ENCODE measurements at regions of chr1 and their contacts with region 1.

Region 1: DNA sequence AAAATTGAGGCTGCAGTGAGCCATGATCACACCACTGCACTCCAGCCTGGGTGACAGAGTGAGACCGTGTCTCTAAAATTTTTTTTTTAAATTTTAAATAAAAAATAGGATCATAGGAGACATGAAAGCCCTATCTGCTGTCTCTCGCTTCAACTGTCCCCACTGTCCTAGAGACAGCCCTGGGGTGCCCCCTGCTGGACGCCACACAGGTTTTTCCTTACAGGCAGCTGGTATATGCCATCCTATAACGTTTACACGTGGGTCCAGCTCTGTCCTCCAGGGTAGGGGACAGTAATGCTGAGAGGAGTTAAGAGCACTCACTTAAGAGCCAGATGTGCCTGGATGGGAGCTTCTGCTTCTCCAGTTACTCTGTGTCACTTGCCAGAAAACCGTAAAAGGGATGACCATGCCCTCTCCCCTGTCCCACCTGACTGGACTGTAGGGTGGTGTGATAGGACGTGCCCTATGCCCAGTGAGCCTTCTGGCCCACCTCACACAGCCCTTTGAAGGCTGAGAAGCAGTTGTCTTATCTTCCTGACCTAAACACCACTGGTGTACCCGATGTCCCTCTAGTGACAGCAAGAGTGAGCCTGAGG is 8.5 kb downstream of the FBXO2 start:
- DNase-seq: peak; percentile 79
- ATAC-seq: peak; percentile 48
- H3K4me3 ChIP-seq: no peak overlapping the region
- H3K4me3 Mint-ChIP-seq: no peak overlapping the region
- H3K27ac ChIP-seq: no peak overlapping the region
- H3K27ac Mint-ChIP-seq: no peak overlapping the region
- H3K4me1 ChIP-seq: peaks cover 12 to 16% of the 10 kb centered on the region in 2 donors
- H3K4me1 Mint-ChIP-seq: peaks cover 18% of the 10 kb centered on the region
- H3K27me3 ChIP-seq: peaks cover 0 to 3% (median 0%) of the 10 kb centered on the region in 4 experiments
- H3K27me3 Mint-ChIP-seq: no peaks in the 10 kb centered on the region
- CTCF ChIP-seq: peak; percentile 93

Region 2: GRCh38 chr1:11262171-11263049 is 383.4 kb before region 1 on chr1 and contains the start of gene MTOR:
- CTCF ChIA-PET with region 1: interaction called, 3 read pairs
- POLR2A ChIA-PET with region 1: no interaction called
- intact Hi-C with region 1: loop called (anchors 5 kb)
- DNase-seq: peak; percentile 99
- ATAC-seq: peak; percentile 97
- H3K4me3 ChIP-seq: peak within 1 kb of the TSS; percentile 88 to 95 (median 89)
- H3K4me3 Mint-ChIP-seq: peak within 1 kb of the TSS; percentile 92
- H3K27ac ChIP-seq: peak within 1 kb of the TSS; percentile 47 to 92
- H3K27ac Mint-ChIP-seq: peak within 1 kb of the TSS; percentile 83
- H3K4me1 ChIP-seq: peaks cover 8 to 17% of the 10 kb centered on the region in 2 donors
- H3K4me1 Mint-ChIP-seq: peaks cover 17% of the 10 kb centered on the region
- H3K27me3 ChIP-seq: no peaks in the 10 kb centered on the region
- H3K27me3 Mint-ChIP-seq: no peaks in the 10 kb centered on the region
- CTCF ChIP-seq: peak; percentile 20
- total RNA-seq, gene MTOR: 50.7 and 52.3 TPM in 2 replicates

Region 3: GRCh38 chr1:11337580-11338073 is 308.1 kb before region 1 on chr1:
- CTCF ChIA-PET with region 1: interaction called, 10 read pairs
- POLR2A ChIA-PET with region 1: no interaction called
- intact Hi-C with region 1: loop called (anchors 1 kb)
- DNase-seq: peak; percentile 72
- ATAC-seq: peak; percentile 56
- H3K4me3 ChIP-seq: no peak overlapping the region
- H3K4me3 Mint-ChIP-seq: no peak overlapping the region
- H3K27ac ChIP-seq: no peak overlapping the region
- H3K27ac Mint-ChIP-seq: no peak overlapping the region
- H3K4me1 ChIP-seq: peaks cover 16 to 23% of the 10 kb centered on the region in 2 donors
- H3K4me1 Mint-ChIP-seq: peaks cover 23% of the 10 kb centered on the region
- H3K27me3 ChIP-seq: peaks cover 0 to 20% (median 6%) of the 10 kb centered on the region in 4 experiments
- H3K27me3 Mint-ChIP-seq: peaks cover 23% of the 10 kb centered on the region
- CTCF ChIP-seq: peak; percentile 87

Region 4: GRCh38 chr1:11634365-11635192 is 11.2 kb before region 1 on chr1:
- CTCF ChIA-PET with region 1: interaction called, 10 read pairs
- POLR2A ChIA-PET with region 1: no interaction called
- intact Hi-C with region 1: no loop called
- DNase-seq: peak; percentile 33
- ATAC-seq: peak; percentile 56
- H3K4me3 ChIP-seq: no peak overlapping the region
- H3K4me3 Mint-ChIP-seq: peak overlapping the region; percentile 44
- H3K27ac ChIP-seq: no peak overlapping the region
- H3K27ac Mint-ChIP-seq: peak overlapping the region; percentile 20
- H3K4me1 ChIP-seq: peaks cover 6 to 8% of the 10 kb centered on the region in 2 donors
- H3K4me1 Mint-ChIP-seq: peaks cover 14% of the 10 kb centered on the region
- H3K27me3 ChIP-seq: peaks cover 0 to 18% (median 0%) of the 10 kb centered on the region in 4 experiments
- H3K27me3 Mint-ChIP-seq: peaks cover 29% of the 10 kb centered on the region
- CTCF ChIP-seq: no peak

Region 5: GRCh38 chr1:11707621-11708276 is 62.0 kb after region 1 on chr1:
- CTCF ChIA-PET with region 1: interaction called, 12 read pairs
- POLR2A ChIA-PET with region 1: no interaction called
- intact Hi-C with region 1: no loop called
- DNase-seq: no peak
- ATAC-seq: no peak
- H3K4me3 ChIP-seq: no peak overlapping the region
- H3K4me3 Mint-ChIP-seq: no peak overlapping the region
- H3K27ac ChIP-seq: no peak overlapping the region
- H3K27ac Mint-ChIP-seq: no peak overlapping the region
- H3K4me1 ChIP-seq: no peaks in the 10 kb centered on the region
- H3K4me1 Mint-ChIP-seq: no peaks in the 10 kb centered on the region
- H3K27me3 ChIP-seq: peaks cover 0 to 12% (median 0%) of the 10 kb centered on the region in 4 experiments
- H3K27me3 Mint-ChIP-seq: peaks cover 13% of the 10 kb centered on the region
- CTCF ChIP-seq: no peak

Region 6: GRCh38 chr1:11735854-11736745 is 90.3 kb after region 1 on chr1 and contains the start of gene AGTRAP:
- CTCF ChIA-PET with region 1: interaction called, 13 read pairs
- POLR2A ChIA-PET with region 1: no interaction called
- intact Hi-C with region 1: loop called (anchors 5 kb)
- DNase-seq: peak; percentile 94
- ATAC-seq: peak; percentile 90
- H3K4me3 ChIP-seq: peak within 1 kb of the TSS; percentile 67 to 99 (median 98)
- H3K4me3 Mint-ChIP-seq: peak within 1 kb of the TSS; percentile 97
- H3K27ac ChIP-seq: peak within 1 kb of the TSS; percentile 14 to 83
- H3K27ac Mint-ChIP-seq: peak within 1 kb of the TSS; percentile 93
- H3K4me1 ChIP-seq: peaks cover 33 to 42% of the 10 kb centered on the region in 2 donors
- H3K4me1 Mint-ChIP-seq: peaks cover 42% of the 10 kb centered on the region
- H3K27me3 ChIP-seq: no peaks in the 10 kb centered on the region
- H3K27me3 Mint-ChIP-seq: no peaks in the 10 kb centered on the region
- CTCF ChIP-seq: no peak
- total RNA-seq, gene AGTRAP: 18.3 and 20.2 TPM in 2 replicates

Region 7: GRCh38 chr1:11893907-11894251 is 248.1 kb after region 1 on chr1:
- CTCF ChIA-PET with region 1: no interaction called
- POLR2A ChIA-PET with region 1: no interaction called
- intact Hi-C with region 1: loop called (anchors 5 kb)
- DNase-seq: peak; percentile 77
- ATAC-seq: peak; percentile 94
- H3K4me3 ChIP-seq: no peak overlapping the region
- H3K4me3 Mint-ChIP-seq: no peak overlapping the region
- H3K27ac ChIP-seq: no peak overlapping the region
- H3K27ac Mint-ChIP-seq: peak overlapping the region; percentile 78
- H3K4me1 ChIP-seq: no peaks in the 10 kb centered on the region
- H3K4me1 Mint-ChIP-seq: no peaks in the 10 kb centered on the region
- H3K27me3 ChIP-seq: peaks cover 0 to 14% (median 3%) of the 10 kb centered on the region in 4 experiments
- H3K27me3 Mint-ChIP-seq: peaks cover 12% of the 10 kb centered on the region
- CTCF ChIP-seq: peak; percentile 86

Measured in B cell (primary cell).